ENCODE measurements at regions of chr14 and their contacts with region 1.

Region 1: GRCh38 chr14:24366721-24367513 is 1.1 kb upstream of the NFATC4 start:
- DNase-seq: peak; percentile 85
- H3K4me3 ChIP-seq: peak overlapping the region; percentile 85 to 86
- H3K27ac ChIP-seq: peak overlapping the region; percentile 93 to 99
- H3K4me1 ChIP-seq: peaks cover 14 to 25% of the 10 kb centered on the region in 2 experiments; a peak in 3 of 4 replicates
- H3K27me3 ChIP-seq: no peaks in the 10 kb centered on the region
- CTCF ChIP-seq: no peak
- EP300 ChIP-seq: peak; percentile 53 to 62; a peak in 2 of 4 replicates
- RAD21 ChIP-seq: no peak; the same call in 1 of the 2 replicates

Region 2: DNA sequence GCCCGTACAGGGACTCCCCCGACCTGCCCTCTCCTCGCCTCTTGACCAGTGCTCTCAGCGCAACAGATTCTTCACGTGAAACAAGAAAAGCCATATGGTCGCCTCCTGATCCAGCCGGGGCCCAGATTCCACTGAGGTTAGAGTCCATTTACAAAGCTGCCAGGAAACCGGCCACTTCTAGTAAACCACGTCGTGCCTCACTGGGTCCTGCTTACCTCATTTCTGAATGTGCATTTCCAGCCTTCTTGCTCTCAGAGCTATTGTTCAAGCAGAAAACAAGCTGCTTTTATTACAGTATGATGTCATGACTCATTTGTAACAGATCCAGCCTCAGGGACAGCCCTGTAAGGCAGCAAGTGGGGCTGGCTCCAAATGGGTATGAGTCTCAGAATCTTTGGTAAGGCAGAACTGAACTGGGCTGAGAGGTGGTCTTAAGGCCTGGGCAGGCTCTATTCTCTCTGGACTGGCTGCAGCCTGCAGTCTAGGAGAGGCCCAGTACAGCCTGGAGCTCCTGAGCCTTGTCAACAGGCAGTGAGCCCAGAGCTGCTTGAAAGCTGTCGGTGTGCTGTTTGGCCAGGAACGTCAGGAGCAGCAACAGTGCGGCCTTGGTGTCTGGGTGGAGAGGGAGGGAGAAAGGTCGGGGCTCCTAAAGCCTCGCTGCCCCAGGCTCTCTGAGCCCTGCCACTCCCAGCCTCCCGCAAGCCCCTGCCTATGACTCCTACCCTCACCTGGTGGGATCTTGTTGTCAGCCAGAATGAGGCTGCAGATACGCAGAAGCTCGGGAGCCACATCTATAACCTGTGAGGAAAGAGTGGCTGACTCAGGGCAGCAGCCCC is 186.7 kb before region 1 on chr14:
- CTCF ChIA-PET with region 1: no interaction called
- POLR2A ChIA-PET with region 1: no interaction called
- DNase-seq: no peak
- H3K4me3 ChIP-seq: no peak overlapping the region
- H3K27ac ChIP-seq: peak overlapping the region; percentile 8 to 16; a peak in 2 of 4 replicates
- H3K4me1 ChIP-seq: peaks cover 0 to 12% of the 10 kb centered on the region in 2 experiments; a peak in 2 of 4 replicates
- H3K27me3 ChIP-seq: no peaks in the 10 kb centered on the region
- CTCF ChIP-seq: no peak
- EP300 ChIP-seq: no peak
- RAD21 ChIP-seq: no peak

Region 3: GRCh38 chr14:24339284-24340151 is 27.4 kb before region 1 on chr14 and contains the start of gene RIPK3:
- CTCF ChIA-PET with region 1: interaction called, 77 read pairs
- POLR2A ChIA-PET with region 1: interaction called, 4 read pairs
- DNase-seq: no peak
- H3K4me3 ChIP-seq: no peak within 1 kb of the TSS
- H3K27ac ChIP-seq: no peak within 1 kb of the TSS
- H3K4me1 ChIP-seq: peaks cover 0 to 2% of the 10 kb centered on the region in 2 experiments; a peak in 1 of 4 replicates
- H3K27me3 ChIP-seq: peaks cover 68% of the 10 kb centered on the region
- CTCF ChIP-seq: no peak
- EP300 ChIP-seq: no peak
- RAD21 ChIP-seq: no peak
- polyA plus RNA-seq, gene RIPK3: not detected in 2 replicates

Region 4: GRCh38 chr14:24377657-24378056 is 10.7 kb after region 1 on chr14:
- CTCF ChIA-PET with region 1: interaction called, 16 read pairs
- POLR2A ChIA-PET with region 1: interaction called, 4 read pairs
- DNase-seq: no peak
- H3K4me3 ChIP-seq: no peak overlapping the region
- H3K27ac ChIP-seq: no peak overlapping the region
- H3K4me1 ChIP-seq: peaks cover 0 to 17% of the 10 kb centered on the region in 2 experiments; a peak in 1 of 4 replicates
- H3K27me3 ChIP-seq: no peaks in the 10 kb centered on the region
- CTCF ChIP-seq: no peak
- EP300 ChIP-seq: no peak
- RAD21 ChIP-seq: no peak

Region 5: GRCh38 chr14:24411443-24412389 is 44.8 kb after region 1 on chr14:
- CTCF ChIA-PET with region 1: interaction called, 37 read pairs
- POLR2A ChIA-PET with region 1: interaction called, 5 read pairs
- DNase-seq: peak; percentile 77
- H3K4me3 ChIP-seq: no peak overlapping the region
- H3K27ac ChIP-seq: no peak overlapping the region
- H3K4me1 ChIP-seq: no peaks in the 10 kb centered on the region; a peak in 1 of 4 replicates
- H3K27me3 ChIP-seq: no peaks in the 10 kb centered on the region
- CTCF ChIP-seq: peak; percentile 73
- EP300 ChIP-seq: no peak
- RAD21 ChIP-seq: peak; percentile 72

Region 6: DNA sequence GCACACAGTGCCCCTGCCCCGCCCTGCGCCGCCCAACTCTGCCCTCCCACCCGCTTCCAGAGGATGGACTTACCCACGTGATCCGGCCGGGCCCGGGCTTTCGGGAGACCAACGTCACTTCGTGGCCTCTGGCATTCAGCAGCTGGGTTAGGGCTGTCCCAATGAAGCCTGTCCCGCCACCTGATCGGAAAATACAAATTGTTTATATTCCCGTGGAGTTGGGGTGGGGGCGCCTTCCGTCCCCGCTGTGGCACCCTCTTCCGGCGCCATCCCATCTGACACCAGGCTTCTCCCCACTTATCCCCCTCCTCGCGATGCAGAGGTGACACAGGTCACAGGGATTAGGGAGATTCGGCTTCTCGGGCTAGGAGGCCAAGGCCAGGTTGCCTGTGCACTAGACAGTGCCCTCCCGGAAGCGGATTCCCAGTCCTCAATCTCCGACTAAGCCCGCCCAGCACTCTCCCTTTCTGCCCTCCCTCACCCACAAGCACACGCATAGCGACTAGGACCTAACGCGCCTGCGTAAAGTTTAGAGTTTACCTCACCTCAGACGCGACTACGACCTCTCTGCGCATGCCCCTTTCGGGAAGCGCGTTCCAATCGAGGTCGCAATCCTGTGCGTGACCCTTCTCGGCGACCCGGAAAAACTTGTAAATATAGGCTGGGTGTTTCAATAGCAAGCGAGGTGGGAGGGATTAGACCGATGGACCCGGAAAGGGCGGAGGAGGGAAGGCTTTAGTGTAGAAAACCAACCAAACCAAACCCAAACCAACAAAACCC is 75.5 kb after region 1 on chr14 and contains the start of gene SDR39U1:
- CTCF ChIA-PET with region 1: interaction called, 275 read pairs
- POLR2A ChIA-PET with region 1: interaction called, 10 read pairs
- DNase-seq: peak; percentile 92
- H3K4me3 ChIP-seq: peak within 1 kb of the TSS; percentile 61 to 75
- H3K27ac ChIP-seq: peak within 1 kb of the TSS; percentile 97 to 98
- H3K4me1 ChIP-seq: peaks cover 0 to 17% of the 10 kb centered on the region in 2 experiments; a peak in 2 of 4 replicates
- H3K27me3 ChIP-seq: no peaks in the 10 kb centered on the region
- CTCF ChIP-seq: no peak
- EP300 ChIP-seq: no peak
- RAD21 ChIP-seq: no peak
- polyA plus RNA-seq, gene SDR39U1: 81.8 and 88.4 TPM in 2 replicates

Region 7: DNA sequence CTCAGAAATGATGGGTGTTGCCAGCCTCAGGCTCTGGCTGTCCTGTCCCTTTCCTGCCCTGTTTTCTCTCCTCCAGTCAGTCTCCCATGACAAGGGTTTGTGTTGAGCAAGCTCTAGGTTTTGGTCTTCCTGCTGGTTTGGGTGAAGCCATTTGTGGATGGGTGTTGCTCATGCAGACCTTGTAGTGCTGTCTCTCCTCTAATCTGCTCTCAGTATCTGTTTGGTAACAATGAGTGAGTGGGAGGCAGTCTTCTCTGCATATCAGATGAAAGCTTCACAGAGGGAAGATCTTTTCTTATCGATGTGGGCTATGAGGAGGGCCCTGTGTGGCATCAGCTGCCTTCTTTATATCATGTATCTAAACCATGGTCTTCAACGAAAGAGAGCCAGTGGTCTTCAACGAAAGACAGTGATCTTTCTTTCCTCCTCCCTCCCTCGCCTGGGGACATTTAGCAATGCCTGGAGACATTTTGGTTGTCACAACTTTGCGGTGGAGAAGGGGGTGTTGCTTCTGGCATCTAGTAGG is 137.6 kb after region 1 on chr14:
- CTCF ChIA-PET with region 1: no interaction called
- POLR2A ChIA-PET with region 1: no interaction called
- DNase-seq: no peak
- H3K4me3 ChIP-seq: no peak overlapping the region
- H3K27ac ChIP-seq: no peak overlapping the region
- H3K4me1 ChIP-seq: no peaks in the 10 kb centered on the region
- H3K27me3 ChIP-seq: no peaks in the 10 kb centered on the region
- CTCF ChIP-seq: no peak
- EP300 ChIP-seq: no peak
- RAD21 ChIP-seq: no peak